ENCODE measurements at regions of chr2 and their contacts with region 1.

Region 1: GRCh38 chr2:238239872-238240751 is at the start of gene HES6:
- DNase-seq: peak; percentile 86

Region 2: GRCh38 chr2:238203094-238203972 is 36.8 kb before region 1 on chr2 and contains the start of gene ILKAP:
- CTCF ChIA-PET with region 1: interaction called, 3 read pairs
- POLR2A ChIA-PET with region 1: interaction called, 11 read pairs
- DNase-seq: peak; percentile 99

Region 3: DNA sequence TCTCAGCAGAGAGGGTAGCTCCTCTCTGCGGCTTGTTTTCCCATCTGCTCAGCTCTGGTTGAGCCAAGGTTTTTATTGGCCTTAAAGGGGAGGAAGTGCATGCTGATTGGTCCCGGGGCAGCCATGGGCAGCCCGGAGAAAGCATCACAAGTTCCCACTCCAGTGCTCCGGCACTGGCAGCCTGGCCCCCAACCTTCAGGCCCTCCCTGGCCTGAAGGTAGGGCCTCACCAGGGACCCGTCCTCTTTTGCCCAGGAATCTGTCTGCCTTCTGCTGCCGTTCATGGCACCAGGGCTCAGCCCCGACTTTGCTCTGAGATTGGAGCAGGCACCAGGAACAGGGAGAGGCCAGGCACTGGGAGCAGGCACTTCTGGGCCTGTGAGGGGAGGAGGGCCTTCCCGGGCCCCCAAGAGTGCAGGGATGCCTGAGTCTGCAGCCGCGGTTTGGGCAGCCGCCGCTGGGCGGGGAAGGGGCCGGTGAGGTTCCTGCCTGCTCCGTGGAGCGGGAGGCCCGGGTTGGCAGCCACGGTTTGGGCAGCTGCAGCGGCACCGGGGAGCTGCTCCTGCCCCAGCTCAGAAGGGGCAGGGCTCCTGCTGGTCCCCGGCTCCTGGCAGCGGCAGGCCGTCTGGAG is 19.1 kb before region 1 on chr2:
- CTCF ChIA-PET with region 1: no interaction called
- POLR2A ChIA-PET with region 1: no interaction called
- DNase-seq: no peak